ENCODE measurements at regions of chr9 and their contacts with region 1.

Region 1: GRCh38 chr9:73889023-73889422 is 608.1 kb upstream of the RORB start:
- DNase-seq: no peak
- ATAC-seq: no peak
- H3K4me3 ChIP-seq: no peak overlapping the region
- H3K4me3 Mint-ChIP-seq: no peak overlapping the region
- H3K27ac ChIP-seq: no peak overlapping the region
- H3K27ac Mint-ChIP-seq: no peak overlapping the region
- H3K4me1 ChIP-seq: no peaks in the 10 kb centered on the region
- H3K4me1 Mint-ChIP-seq: no peaks in the 10 kb centered on the region
- H3K27me3 ChIP-seq: no peaks in the 10 kb centered on the region
- H3K27me3 Mint-ChIP-seq: no peaks in the 10 kb centered on the region

Region 2: GRCh38 chr9:73863924-73864323 is 25.1 kb before region 1 on chr9:
- CTCF ChIA-PET with region 1: no interaction called
- POLR2A ChIA-PET with region 1: interaction called in 1 of 2 experiments, 11 read pairs
- DNase-seq: no peak
- ATAC-seq: no peak
- H3K4me3 ChIP-seq: no peak overlapping the region
- H3K4me3 Mint-ChIP-seq: no peak overlapping the region
- H3K27ac ChIP-seq: no peak overlapping the region
- H3K27ac Mint-ChIP-seq: no peak overlapping the region
- H3K4me1 ChIP-seq: no peaks in the 10 kb centered on the region
- H3K4me1 Mint-ChIP-seq: no peaks in the 10 kb centered on the region
- H3K27me3 ChIP-seq: no peaks in the 10 kb centered on the region
- H3K27me3 Mint-ChIP-seq: no peaks in the 10 kb centered on the region

Region 3: DNA sequence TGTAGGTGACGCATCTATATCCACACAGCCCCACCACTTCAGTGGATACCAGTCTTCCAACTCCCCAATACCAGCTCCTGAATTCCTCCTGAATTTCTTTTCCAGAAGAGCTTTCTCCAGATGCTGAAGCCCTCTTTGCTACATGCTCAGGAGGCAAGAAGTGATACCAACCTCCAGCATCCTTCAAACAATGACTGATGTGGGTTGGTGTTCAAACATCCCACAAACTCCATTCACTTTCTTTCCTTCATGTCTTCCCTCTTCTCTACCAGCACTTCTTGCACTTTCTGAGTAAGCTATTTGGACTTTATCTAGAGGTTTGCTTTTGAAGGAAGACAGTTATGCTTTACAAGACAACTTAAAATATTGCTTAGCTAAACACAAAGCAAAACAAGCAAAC is 428.2 kb after region 1 on chr9:
- CTCF ChIA-PET with region 1: no interaction called
- POLR2A ChIA-PET with region 1: no interaction called
- DNase-seq: no peak
- ATAC-seq: no peak
- H3K4me3 ChIP-seq: no peak overlapping the region
- H3K4me3 Mint-ChIP-seq: no peak overlapping the region
- H3K27ac ChIP-seq: no peak overlapping the region
- H3K27ac Mint-ChIP-seq: no peak overlapping the region
- H3K4me1 ChIP-seq: peaks cover 0 to 2% of the 10 kb centered on the region in 2 experiments
- H3K4me1 Mint-ChIP-seq: no peaks in the 10 kb centered on the region
- H3K27me3 ChIP-seq: no peaks in the 10 kb centered on the region
- H3K27me3 Mint-ChIP-seq: no peaks in the 10 kb centered on the region